Natural killer cell (primary cell): ENCODE measurements at regions of chr7 and their contacts with region 1.

Region 1: GRCh38 chr7:116984917-116985316 is 31.6 kb downstream of the ST7 start:
- DNase-seq: peak in 1 of 2 donors; percentile 66
- ATAC-seq: peak; percentile 50 to 68 (median 59)
- H3K4me3 ChIP-seq: no peak overlapping the region
- H3K4me3 Mint-ChIP-seq: no peak overlapping the region
- H3K27ac ChIP-seq: no peak overlapping the region
- H3K27ac Mint-ChIP-seq: no peak overlapping the region
- H3K4me1 ChIP-seq: no peaks in the 10 kb centered on the region
- H3K4me1 Mint-ChIP-seq: peaks cover 7% of the 10 kb centered on the region in 2 donors
- H3K27me3 ChIP-seq: no peaks in the 10 kb centered on the region
- H3K27me3 Mint-ChIP-seq: no peaks in the 10 kb centered on the region
- CTCF ChIP-seq: peak; percentile 69

Region 2: GRCh38 chr7:117119192-117119924 is 134.4 kb after region 1 on chr7:
- intact Hi-C with region 1: loop called (anchors 1 kb)
- DNase-seq: peak; percentile 53 to 86
- ATAC-seq: peak; percentile 67 to 70 (median 68)
- H3K4me3 ChIP-seq: no peak overlapping the region
- H3K4me3 Mint-ChIP-seq: no peak overlapping the region
- H3K27ac ChIP-seq: no peak overlapping the region
- H3K27ac Mint-ChIP-seq: no peak overlapping the region
- H3K4me1 ChIP-seq: no peaks in the 10 kb centered on the region
- H3K4me1 Mint-ChIP-seq: peaks cover under 1% of the 10 kb centered on the region in 2 donors
- H3K27me3 ChIP-seq: no peaks in the 10 kb centered on the region
- H3K27me3 Mint-ChIP-seq: no peaks in the 10 kb centered on the region
- CTCF ChIP-seq: peak; percentile 81

Region 3: GRCh38 chr7:118013252-118014010 is 1028.5 kb after region 1 on chr7:
- intact Hi-C with region 1: no loop called
- DNase-seq: no peak
- ATAC-seq: no peak
- H3K4me3 ChIP-seq: no peak overlapping the region
- H3K4me3 Mint-ChIP-seq: no peak overlapping the region
- H3K27ac ChIP-seq: no peak overlapping the region
- H3K27ac Mint-ChIP-seq: no peak overlapping the region
- H3K4me1 ChIP-seq: no peaks in the 10 kb centered on the region
- H3K4me1 Mint-ChIP-seq: no peaks in the 10 kb centered on the region
- H3K27me3 ChIP-seq: no peaks in the 10 kb centered on the region
- H3K27me3 Mint-ChIP-seq: no peaks in the 10 kb centered on the region
- CTCF ChIP-seq: no peak